Calu3 (cell line): ENCODE measurements at regions of chr12 and their contacts with region 1.

Region 1: GRCh38 chr12:63068857-63069442 is 82.1 kb downstream of the AVPR1A start:
- DNase-seq: peak; percentile 30
- H3K4me3 Mint-ChIP-seq: no peak overlapping the region
- H3K27ac Mint-ChIP-seq: no peak overlapping the region
- H3K4me1 Mint-ChIP-seq: no peaks in the 10 kb centered on the region
- H3K27me3 Mint-ChIP-seq: no peaks in the 10 kb centered on the region
- CTCF ChIP-seq: peak; percentile 48

Region 2: DNA sequence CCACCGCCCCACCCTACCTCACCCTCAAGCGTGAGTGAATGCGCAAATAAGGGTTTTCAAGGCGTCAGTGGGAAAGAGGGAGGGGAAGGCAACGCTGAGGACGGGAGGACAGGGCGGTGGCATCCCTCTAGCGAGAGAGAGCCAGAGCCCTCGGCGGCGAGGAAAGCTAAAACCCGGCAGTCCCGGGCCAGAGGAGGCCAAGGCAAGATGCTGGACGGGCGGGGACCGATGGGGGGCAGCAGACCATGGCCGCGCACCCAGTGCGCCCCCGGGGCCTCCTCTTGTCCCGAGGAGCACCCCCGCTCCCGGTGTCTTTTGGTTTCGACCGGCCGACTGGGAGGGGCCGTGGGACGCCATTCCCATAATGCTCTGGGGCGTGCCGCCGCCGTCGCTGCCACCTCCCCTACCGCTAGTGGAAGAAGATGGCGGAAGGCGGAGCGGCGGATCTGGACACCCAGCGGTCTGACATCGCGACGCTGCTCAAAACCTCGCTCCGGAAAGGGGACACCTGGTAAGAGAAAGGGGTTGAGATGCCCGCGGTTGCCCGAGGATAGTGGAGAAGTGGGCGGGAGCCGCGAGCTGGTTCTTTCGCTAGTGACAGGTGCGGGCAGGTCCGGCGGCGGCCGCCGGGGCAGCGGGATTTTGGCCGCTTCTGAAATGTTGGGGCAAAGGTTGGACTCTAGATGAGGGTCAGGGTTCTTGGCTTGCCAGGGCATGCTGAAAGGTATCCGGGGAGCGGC is 808.8 kb before region 1 on chr12 and contains the start of gene USP15:
- CTCF ChIA-PET with region 1: no interaction called
- intact Hi-C with region 1: loop called (anchors 10 kb)
- DNase-seq: peak; percentile 99
- H3K4me3 Mint-ChIP-seq: peak within 1 kb of the TSS; percentile 90
- H3K27ac Mint-ChIP-seq: peak within 1 kb of the TSS; percentile 98
- H3K4me1 Mint-ChIP-seq: peaks cover 18% of the 10 kb centered on the region
- H3K27me3 Mint-ChIP-seq: no peaks in the 10 kb centered on the region
- CTCF ChIP-seq: peak; percentile 76
- total RNA-seq, gene USP15: 66.1 and 82.4 TPM in 2 replicates

Region 3: DNA sequence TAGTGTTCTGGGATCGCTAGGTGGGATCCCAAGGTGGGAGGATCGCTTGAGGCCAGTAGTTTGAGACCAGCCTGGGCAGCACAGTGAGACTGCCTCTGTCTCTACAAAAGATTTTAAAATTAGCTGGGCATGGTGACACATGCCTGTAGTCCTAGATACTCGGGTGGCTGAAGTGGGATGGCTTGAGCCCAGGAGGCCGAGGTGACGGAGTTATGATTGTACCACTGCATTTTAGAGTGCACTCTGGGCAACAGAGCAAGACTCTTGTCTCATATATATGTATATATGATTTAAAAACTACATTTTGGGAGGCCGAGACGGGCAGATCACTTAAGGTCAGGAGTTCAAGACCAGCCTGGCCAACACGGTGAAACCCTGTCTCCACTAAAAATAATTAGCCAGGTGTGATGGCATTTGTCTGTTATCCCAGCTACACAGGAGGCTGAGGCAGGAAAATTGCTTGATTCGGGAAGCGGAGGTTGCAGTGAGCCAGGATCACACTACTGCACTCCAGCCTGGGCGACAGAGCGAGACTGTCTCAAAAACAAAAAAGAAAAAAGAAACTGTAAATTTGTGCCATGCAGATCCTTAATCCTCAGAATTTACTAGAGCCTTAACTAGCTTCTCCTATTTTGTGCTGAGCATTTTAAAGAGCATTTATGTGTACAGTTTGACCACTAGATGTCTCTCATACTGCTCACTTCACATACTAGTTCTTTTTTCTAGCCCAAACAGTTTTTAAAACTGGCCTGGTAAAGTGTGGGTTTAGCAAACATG is 487.5 kb before region 1 on chr12:
- CTCF ChIA-PET with region 1: interaction called, 8 read pairs
- intact Hi-C with region 1: loop called (anchors 5 kb)
- DNase-seq: no peak
- H3K4me3 Mint-ChIP-seq: no peak overlapping the region
- H3K27ac Mint-ChIP-seq: no peak overlapping the region
- H3K4me1 Mint-ChIP-seq: no peaks in the 10 kb centered on the region
- H3K27me3 Mint-ChIP-seq: no peaks in the 10 kb centered on the region
- CTCF ChIP-seq: peak; percentile 27

Region 4: DNA sequence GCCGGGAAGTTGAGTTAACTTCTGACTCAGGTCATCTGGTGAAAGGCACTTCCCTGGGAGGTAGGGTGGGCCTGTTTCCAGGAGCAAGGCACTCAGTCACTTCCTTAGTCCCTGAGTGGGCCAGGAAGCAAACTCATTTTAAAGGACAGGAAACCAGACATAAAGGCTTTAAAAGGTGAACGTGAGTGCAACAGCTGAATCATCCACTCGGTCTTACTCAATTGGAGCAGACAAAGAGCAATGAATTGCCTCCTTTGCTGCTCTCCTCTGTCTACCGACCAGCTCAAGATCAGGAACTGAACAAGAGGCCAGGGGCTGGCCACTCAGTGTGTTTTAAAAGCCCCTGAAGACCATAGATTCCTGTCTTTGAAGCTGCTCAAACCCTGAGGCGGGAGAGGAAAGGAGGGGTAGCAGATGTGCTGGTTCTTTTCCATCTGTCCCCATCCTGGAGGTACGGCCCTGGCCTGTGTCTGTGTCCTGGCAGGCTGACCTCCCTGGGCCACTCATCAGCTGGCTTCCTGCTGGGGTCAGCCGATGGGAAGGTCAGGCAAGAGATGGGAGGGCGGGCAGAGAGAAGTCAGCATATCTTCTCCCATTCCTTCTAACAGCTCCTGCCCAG is 282.9 kb before region 1 on chr12:
- CTCF ChIA-PET with region 1: no interaction called
- intact Hi-C with region 1: no loop called
- DNase-seq: peak; percentile 77
- H3K4me3 Mint-ChIP-seq: peak overlapping the region; percentile 8
- H3K27ac Mint-ChIP-seq: peak overlapping the region; percentile 93
- H3K4me1 Mint-ChIP-seq: peaks cover 33% of the 10 kb centered on the region
- H3K27me3 Mint-ChIP-seq: no peaks in the 10 kb centered on the region
- CTCF ChIP-seq: no peak

Region 5: GRCh38 chr12:62799126-62799736 is 269.7 kb before region 1 on chr12:
- CTCF ChIA-PET with region 1: interaction called, 20 read pairs
- intact Hi-C with region 1: loop called (anchors 1 kb)
- DNase-seq: peak; percentile 83
- H3K4me3 Mint-ChIP-seq: no peak overlapping the region
- H3K27ac Mint-ChIP-seq: peak overlapping the region; percentile 60
- H3K4me1 Mint-ChIP-seq: peaks cover 36% of the 10 kb centered on the region
- H3K27me3 Mint-ChIP-seq: no peaks in the 10 kb centered on the region
- CTCF ChIP-seq: peak; percentile 74

Region 6: GRCh38 chr12:62813031-62813829 is 255.7 kb before region 1 on chr12:
- CTCF ChIA-PET with region 1: interaction called, 5 read pairs
- intact Hi-C with region 1: loop called (anchors 2 kb)
- DNase-seq: peak; percentile 66
- H3K4me3 Mint-ChIP-seq: no peak overlapping the region
- H3K27ac Mint-ChIP-seq: no peak overlapping the region
- H3K4me1 Mint-ChIP-seq: peaks cover 13% of the 10 kb centered on the region
- H3K27me3 Mint-ChIP-seq: no peaks in the 10 kb centered on the region
- CTCF ChIP-seq: peak; percentile 80

Region 7: DNA sequence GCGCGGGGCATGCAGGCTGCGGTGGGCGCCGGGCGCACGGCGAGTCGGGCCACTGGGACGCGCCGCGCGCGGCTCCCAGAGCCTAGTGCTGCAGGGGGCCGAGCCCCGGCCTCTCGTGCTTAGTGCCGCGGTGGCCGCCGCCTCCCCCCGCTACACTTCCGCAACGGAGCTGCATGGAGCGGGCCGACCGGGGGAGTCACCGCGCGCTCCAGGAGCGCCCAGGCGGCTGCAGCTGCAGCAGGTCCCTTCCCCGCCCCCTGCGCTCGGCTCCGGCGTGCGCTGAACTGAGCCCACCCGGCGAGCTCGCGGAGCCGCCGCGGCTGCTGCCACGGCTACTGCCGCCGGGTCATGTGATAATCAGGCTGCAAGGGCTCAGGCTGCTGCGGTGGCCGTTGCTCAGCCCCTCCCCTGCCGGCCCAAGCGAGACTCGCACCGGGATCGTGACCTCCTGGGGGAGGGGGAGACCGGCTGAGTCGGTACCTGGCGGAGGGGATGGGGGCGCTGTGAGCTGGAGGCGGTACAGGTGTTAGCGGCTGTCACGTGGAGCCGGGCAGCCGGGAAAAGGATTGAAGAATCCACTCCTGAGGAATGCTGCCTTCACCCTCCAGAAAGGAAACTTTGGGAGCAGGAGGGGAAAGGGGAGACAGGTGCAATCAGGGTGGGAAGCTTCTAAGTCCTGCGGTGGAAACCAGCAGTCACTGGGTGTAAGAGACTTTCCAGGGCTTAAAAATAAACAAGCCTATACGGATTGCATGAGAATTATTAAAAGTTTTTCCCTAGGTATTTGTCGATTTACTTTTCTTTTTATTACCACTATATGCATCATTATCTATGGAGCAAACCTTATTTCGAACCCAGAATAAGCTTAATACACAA is 133.9 kb before region 1 on chr12 and contains the start of gene PPM1H:
- CTCF ChIA-PET with region 1: interaction called, 17 read pairs
- intact Hi-C with region 1: loop called (anchors 2 kb)
- DNase-seq: peak; percentile 99
- H3K4me3 Mint-ChIP-seq: peak within 1 kb of the TSS; percentile 76
- H3K27ac Mint-ChIP-seq: peak within 1 kb of the TSS; percentile 90
- H3K4me1 Mint-ChIP-seq: peaks cover 34% of the 10 kb centered on the region
- H3K27me3 Mint-ChIP-seq: no peaks in the 10 kb centered on the region
- CTCF ChIP-seq: peak; percentile 93
- total RNA-seq, gene PPM1H: 36.7 and 39.1 TPM in 2 replicates

Region 8: DNA sequence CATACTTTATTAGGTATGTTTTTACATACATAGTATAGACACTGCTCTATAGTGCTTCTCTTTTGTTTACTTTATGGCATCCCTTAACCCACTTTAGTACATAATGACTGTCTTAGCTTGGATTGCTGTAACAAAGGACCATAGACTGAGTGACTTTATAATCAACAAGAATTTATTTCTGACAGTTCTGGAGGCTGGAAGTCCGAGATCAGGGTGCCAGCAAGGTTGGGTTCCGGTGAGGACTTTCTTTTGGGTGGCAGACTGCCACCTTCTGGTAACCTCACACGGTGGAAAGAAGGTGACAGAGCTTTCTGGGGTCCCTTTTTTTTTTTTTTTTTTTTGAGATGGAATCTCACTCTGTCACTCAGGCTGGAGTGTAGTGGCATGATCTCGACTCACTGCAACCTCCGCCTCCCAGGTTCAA is 85.3 kb before region 1 on chr12:
- CTCF ChIA-PET with region 1: no interaction called
- intact Hi-C with region 1: loop called (anchors 5 kb)
- DNase-seq: peak; percentile 55
- H3K4me3 Mint-ChIP-seq: no peak overlapping the region
- H3K27ac Mint-ChIP-seq: no peak overlapping the region
- H3K4me1 Mint-ChIP-seq: peaks cover 9% of the 10 kb centered on the region
- H3K27me3 Mint-ChIP-seq: no peaks in the 10 kb centered on the region
- CTCF ChIP-seq: peak; percentile 58

Region 9: GRCh38 chr12:63457857-63458256 is 388.9 kb after region 1 on chr12:
- CTCF ChIA-PET with region 1: no interaction called
- intact Hi-C with region 1: no loop called
- DNase-seq: no peak
- H3K4me3 Mint-ChIP-seq: no peak overlapping the region
- H3K27ac Mint-ChIP-seq: no peak overlapping the region
- H3K4me1 Mint-ChIP-seq: no peaks in the 10 kb centered on the region
- H3K27me3 Mint-ChIP-seq: no peaks in the 10 kb centered on the region
- CTCF ChIP-seq: no peak